Esophagus muscularis mucosa (tissue), 4 donors: ENCODE measurements at regions of chr1 and their contacts with region 1.

Region 1: DNA sequence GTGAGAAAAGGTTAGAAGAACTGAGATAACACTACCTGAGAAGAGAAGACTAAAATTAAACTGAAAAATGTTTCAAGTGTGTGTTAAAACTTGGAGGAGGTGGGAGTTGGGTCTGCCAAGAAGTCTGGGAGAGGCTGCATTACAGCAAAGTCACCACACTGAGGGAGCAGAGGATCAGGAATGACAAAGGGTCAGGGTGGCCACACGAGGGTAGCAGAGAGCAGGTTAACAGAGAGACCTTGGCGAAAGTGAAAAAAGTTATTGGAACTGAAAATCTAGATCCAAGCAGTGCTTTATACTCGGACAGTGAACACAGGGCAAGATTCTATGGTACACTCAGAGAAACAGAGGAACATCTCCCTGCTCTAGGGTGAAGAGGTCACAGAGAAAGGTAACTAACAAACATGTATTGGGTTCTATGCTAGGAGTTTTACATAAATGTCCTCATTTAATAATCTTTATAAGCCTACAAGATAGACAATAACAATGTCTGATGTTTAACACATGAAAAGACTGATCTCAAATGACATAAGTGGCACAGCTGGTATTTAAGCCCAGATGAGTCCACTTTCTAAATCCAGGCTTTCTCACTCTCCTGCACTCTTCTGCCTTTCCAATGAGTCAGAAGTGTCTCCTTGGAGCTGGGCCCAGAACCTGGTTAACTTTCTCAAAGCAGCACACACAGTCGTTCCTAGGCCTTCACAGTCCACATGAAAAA is 10.3 kb upstream of the CADM3 start:
- DNase-seq: no peak
- H3K4me3 ChIP-seq: no peak overlapping the region
- H3K27ac ChIP-seq: peak overlapping the region; percentile 49 to 66 (median 62)
- H3K4me1 ChIP-seq: peaks cover 6 to 10% (median 8%) of the 10 kb centered on the region in 4 donors
- H3K27me3 ChIP-seq: peaks cover 0 to 14% (median 0%) of the 10 kb centered on the region in 4 donors
- CTCF ChIP-seq: peak; percentile 92 to 99 (median 96)
- EP300 ChIP-seq: no peak
- POLR2A ChIP-seq: no peak

Region 2: GRCh38 chr1:159197561-159198557 is 36.7 kb after region 1 on chr1:
- intact Hi-C with region 1: loop called (anchors 2 kb)
- DNase-seq: no peak
- H3K4me3 ChIP-seq: peak overlapping the region in 2 of 4 donors; percentile 30 to 34
- H3K27ac ChIP-seq: no peak overlapping the region
- H3K4me1 ChIP-seq: no peaks in the 10 kb centered on the region
- H3K27me3 ChIP-seq: peaks cover 0 to 23% (median 0%) of the 10 kb centered on the region in 4 donors
- CTCF ChIP-seq: peak; percentile 84 to 87 (median 85)
- EP300 ChIP-seq: no peak
- POLR2A ChIP-seq: no peak

Region 3: GRCh38 chr1:159214149-159214760 is 53.1 kb after region 1 on chr1:
- intact Hi-C with region 1: loop called (anchors 2 kb)
- DNase-seq: peak; percentile 89
- H3K4me3 ChIP-seq: no peak overlapping the region
- H3K27ac ChIP-seq: no peak overlapping the region
- H3K4me1 ChIP-seq: no peaks in the 10 kb centered on the region
- H3K27me3 ChIP-seq: peaks cover 0 to 56% (median 2%) of the 10 kb centered on the region in 4 donors
- CTCF ChIP-seq: peak; percentile 77 to 90 (median 79)
- EP300 ChIP-seq: no peak
- POLR2A ChIP-seq: no peak